Naive thymus-derived CD4-positive, alpha-beta T cell (primary cell): ENCODE measurements at regions of chr14 and their contacts with region 1.

Region 1: DNA sequence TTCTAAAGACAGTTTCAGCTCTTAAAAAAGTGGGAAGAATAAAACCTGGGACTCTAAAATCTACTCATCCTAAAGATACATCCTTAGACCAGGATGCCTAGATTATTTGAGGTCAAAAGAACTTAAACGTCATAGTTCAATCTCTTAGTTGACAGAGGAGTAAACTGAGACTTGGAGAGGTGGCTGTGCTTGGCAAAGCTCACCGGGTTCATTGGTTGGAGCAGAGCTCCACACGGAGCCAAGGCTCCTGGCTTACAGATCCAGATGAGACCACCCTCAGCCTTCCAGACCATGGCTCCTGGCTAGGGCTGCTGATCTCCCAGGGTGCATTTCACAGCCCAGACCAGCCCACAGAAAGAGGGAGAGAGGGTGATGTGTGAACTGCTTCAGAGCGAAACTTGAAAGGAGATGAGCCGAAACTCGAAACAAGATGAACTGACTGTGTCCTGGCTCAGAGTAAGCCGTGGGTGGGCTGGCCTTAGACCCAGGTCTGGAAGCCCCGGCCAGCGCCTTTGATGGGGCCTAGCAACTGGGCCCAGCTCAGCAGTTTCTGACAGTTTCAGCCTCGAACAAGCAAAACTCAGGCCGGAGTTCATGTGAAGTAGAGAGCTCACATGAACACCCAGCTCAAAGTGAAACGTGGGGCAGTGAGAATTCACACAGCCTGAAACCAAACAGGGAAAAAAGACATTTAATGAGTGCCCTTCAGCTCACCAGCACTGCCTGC is 1044.8 kb downstream of the BCL11B start:
- DNase-seq: peak in 4 of 9 donors; percentile 33 to 57 (median 38)
- ATAC-seq: no peak
- H3K4me3 ChIP-seq: peak overlapping the region; percentile 28
- H3K4me3 Mint-ChIP-seq: peak overlapping the region; percentile 51 to 85 (median 68)
- H3K27ac ChIP-seq: peak overlapping the region; percentile 83
- H3K27ac Mint-ChIP-seq: peak overlapping the region; percentile 92 to 100 (median 96)
- H3K4me1 ChIP-seq: peaks cover 35 to 90% of the 10 kb centered on the region in 2 donors
- H3K4me1 Mint-ChIP-seq: peaks cover 48 to 96% (median 91%) of the 10 kb centered on the region in 7 donors
- H3K27me3 ChIP-seq: no peaks in the 10 kb centered on the region
- H3K27me3 Mint-ChIP-seq: no peaks in the 10 kb centered on the region

Region 2: GRCh38 chr14:98099527-98099926 is 127.6 kb before region 1 on chr14:
- CTCF ChIA-PET with region 1: no interaction called
- POLR2A ChIA-PET with region 1: no interaction called
- intact Hi-C with region 1: no loop called
- DNase-seq: no peak
- ATAC-seq: no peak
- H3K4me3 ChIP-seq: no peak overlapping the region
- H3K4me3 Mint-ChIP-seq: peak overlapping the region in 4 of 10 donors; percentile 11 to 51 (median 30)
- H3K27ac ChIP-seq: no peak overlapping the region
- H3K27ac Mint-ChIP-seq: peak overlapping the region in 7 of 9 donors; percentile 6 to 81 (median 26)
- H3K4me1 ChIP-seq: peaks cover 0 to 16% of the 10 kb centered on the region in 2 donors
- H3K4me1 Mint-ChIP-seq: peaks cover 10 to 48% (median 38%) of the 10 kb centered on the region in 7 donors
- H3K27me3 ChIP-seq: no peaks in the 10 kb centered on the region
- H3K27me3 Mint-ChIP-seq: no peaks in the 10 kb centered on the region

Region 3: DNA sequence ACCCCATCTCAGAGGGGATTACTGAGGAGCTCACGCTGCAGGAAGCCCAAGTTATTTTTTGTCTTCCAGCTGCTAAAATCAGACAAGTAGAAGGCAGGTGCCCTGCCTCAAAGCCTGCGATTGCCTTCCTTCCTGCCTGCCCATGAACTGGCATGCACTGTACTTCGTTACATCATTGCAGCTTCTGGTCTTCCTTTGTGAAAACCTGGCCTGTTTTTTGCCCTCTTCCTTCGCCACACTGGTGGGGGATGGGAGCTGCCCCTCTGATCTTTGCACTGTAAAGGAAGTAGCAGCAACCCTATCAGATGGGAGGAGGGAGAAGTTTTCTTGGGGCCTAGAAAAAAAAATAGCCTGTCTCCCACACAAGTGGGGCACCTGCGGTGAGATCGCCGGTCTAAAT is 53.9 kb before region 1 on chr14:
- CTCF ChIA-PET with region 1: no interaction called
- POLR2A ChIA-PET with region 1: interaction called, 8 read pairs
- intact Hi-C with region 1: loop called in 1 of 2 experiments (anchors 2 kb)
- DNase-seq: peak in 7 of 9 donors; percentile 71 to 84 (median 82)
- ATAC-seq: peak; percentile 78
- H3K4me3 ChIP-seq: peak overlapping the region; percentile 33
- H3K4me3 Mint-ChIP-seq: peak overlapping the region; percentile 74 to 90 (median 84)
- H3K27ac ChIP-seq: peak overlapping the region; percentile 81
- H3K27ac Mint-ChIP-seq: peak overlapping the region; percentile 89 to 100 (median 97)
- H3K4me1 ChIP-seq: peaks cover 100% of the 10 kb centered on the region in 2 donors
- H3K4me1 Mint-ChIP-seq: peaks cover 59 to 100% (median 99%) of the 10 kb centered on the region in 7 donors
- H3K27me3 ChIP-seq: no peaks in the 10 kb centered on the region
- H3K27me3 Mint-ChIP-seq: no peaks in the 10 kb centered on the region

Region 4: GRCh38 chr14:98210045-98210672 is 17.0 kb before region 1 on chr14:
- CTCF ChIA-PET with region 1: interaction called, 10 read pairs
- POLR2A ChIA-PET with region 1: interaction called, 35 read pairs
- intact Hi-C with region 1: loop called (anchors 1 to 2 kb)
- DNase-seq: peak in 5 of 9 donors; percentile 36 to 58 (median 50)
- ATAC-seq: peak; percentile 68
- H3K4me3 ChIP-seq: peak overlapping the region; percentile 34
- H3K4me3 Mint-ChIP-seq: peak overlapping the region; percentile 65 to 86 (median 74)
- H3K27ac ChIP-seq: peak overlapping the region; percentile 83
- H3K27ac Mint-ChIP-seq: peak overlapping the region; percentile 91 to 100 (median 97)
- H3K4me1 ChIP-seq: peaks cover 44 to 82% of the 10 kb centered on the region in 2 donors
- H3K4me1 Mint-ChIP-seq: peaks cover 0 to 95% (median 57%) of the 10 kb centered on the region in 7 donors
- H3K27me3 ChIP-seq: no peaks in the 10 kb centered on the region
- H3K27me3 Mint-ChIP-seq: peaks cover 0 to 1% (median 0%) of the 10 kb centered on the region in 5 donors

Region 5: GRCh38 chr14:98259881-98260280 is 32.7 kb after region 1 on chr14:
- CTCF ChIA-PET with region 1: no interaction called
- POLR2A ChIA-PET with region 1: no interaction called
- intact Hi-C with region 1: loop called in 1 of 2 experiments (anchors 1 kb)
- DNase-seq: no peak
- ATAC-seq: no peak
- H3K4me3 ChIP-seq: no peak overlapping the region
- H3K4me3 Mint-ChIP-seq: no peak overlapping the region
- H3K27ac ChIP-seq: no peak overlapping the region
- H3K27ac Mint-ChIP-seq: no peak overlapping the region
- H3K4me1 ChIP-seq: no peaks in the 10 kb centered on the region
- H3K4me1 Mint-ChIP-seq: peaks cover 0 to 36% (median 17%) of the 10 kb centered on the region in 7 donors
- H3K27me3 ChIP-seq: no peaks in the 10 kb centered on the region
- H3K27me3 Mint-ChIP-seq: no peaks in the 10 kb centered on the region

Region 6: DNA sequence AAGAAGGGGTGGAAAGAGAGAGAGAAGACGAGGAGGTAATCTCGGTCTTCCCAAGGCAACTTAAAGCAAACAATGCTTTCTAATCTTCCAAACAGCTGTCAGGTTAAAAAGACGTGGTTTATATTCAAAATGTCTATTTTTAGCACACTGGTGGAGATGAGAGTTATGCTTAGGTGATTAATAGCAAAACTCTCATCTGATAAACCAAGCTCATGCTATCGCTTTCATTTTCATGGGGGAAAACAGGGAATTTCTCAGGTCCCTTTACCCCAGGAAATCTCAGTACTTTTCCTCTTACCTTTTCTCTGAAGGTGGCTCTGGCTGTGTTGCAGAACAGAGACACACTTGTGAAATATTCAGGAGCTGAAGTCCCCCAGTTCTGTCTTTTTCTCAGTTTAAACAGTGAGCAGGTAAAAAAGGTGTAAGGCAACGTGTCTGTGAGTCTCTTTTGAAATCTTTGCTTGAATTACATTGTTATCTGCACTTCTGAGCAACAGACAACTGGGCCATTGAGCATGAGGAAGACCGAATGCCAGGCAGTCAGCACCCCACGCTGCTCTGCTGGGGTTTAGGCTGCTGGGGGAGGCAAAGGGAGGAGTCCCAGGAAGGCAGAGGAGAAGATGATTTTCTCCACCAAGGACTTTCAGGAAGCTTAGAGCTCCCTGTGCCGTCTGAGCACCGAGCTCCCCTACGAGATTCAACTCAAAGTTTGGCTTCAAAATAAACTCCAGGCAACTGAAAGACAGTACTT is 285.5 kb after region 1 on chr14:
- CTCF ChIA-PET with region 1: no interaction called
- POLR2A ChIA-PET with region 1: no interaction called
- intact Hi-C with region 1: no loop called
- DNase-seq: peak in 2 of 9 donors; percentile 15 to 18
- ATAC-seq: no peak
- H3K4me3 ChIP-seq: peak overlapping the region; percentile 24
- H3K4me3 Mint-ChIP-seq: peak overlapping the region; percentile 44 to 73 (median 64)
- H3K27ac ChIP-seq: no peak overlapping the region
- H3K27ac Mint-ChIP-seq: peak overlapping the region in 8 of 9 donors; percentile 48 to 85 (median 72)
- H3K4me1 ChIP-seq: peaks cover 3 to 9% of the 10 kb centered on the region in 2 donors
- H3K4me1 Mint-ChIP-seq: peaks cover 14 to 45% (median 33%) of the 10 kb centered on the region in 7 donors
- H3K27me3 ChIP-seq: no peaks in the 10 kb centered on the region
- H3K27me3 Mint-ChIP-seq: no peaks in the 10 kb centered on the region

Region 7: DNA sequence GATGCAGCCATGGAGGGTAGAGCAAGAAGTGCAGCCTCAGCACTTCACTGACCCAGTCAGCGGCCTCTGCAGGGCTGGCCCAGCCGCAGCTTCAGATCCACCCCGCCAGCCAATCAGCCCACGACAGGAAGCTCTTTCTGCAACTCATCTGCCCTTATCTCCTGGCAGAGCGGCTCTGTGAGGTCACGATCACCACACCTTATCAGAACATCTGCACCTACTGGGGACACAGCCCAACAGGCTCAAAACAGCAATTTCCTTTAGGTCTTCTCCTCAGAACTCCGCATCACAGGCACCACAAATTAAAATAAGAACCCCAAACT is 757.5 kb after region 1 on chr14:
- CTCF ChIA-PET with region 1: no interaction called
- POLR2A ChIA-PET with region 1: no interaction called
- intact Hi-C with region 1: loop called in 1 of 2 experiments (anchors 5 kb)
- DNase-seq: peak; percentile 27 to 76 (median 67)
- ATAC-seq: peak; percentile 96
- H3K4me3 ChIP-seq: peak overlapping the region; percentile 17
- H3K4me3 Mint-ChIP-seq: peak overlapping the region; percentile 51 to 86 (median 78)
- H3K27ac ChIP-seq: peak overlapping the region; percentile 56
- H3K27ac Mint-ChIP-seq: peak overlapping the region; percentile 74 to 97 (median 94)
- H3K4me1 ChIP-seq: peaks cover 29 to 32% of the 10 kb centered on the region in 2 donors
- H3K4me1 Mint-ChIP-seq: peaks cover 27 to 65% (median 48%) of the 10 kb centered on the region in 7 donors
- H3K27me3 ChIP-seq: no peaks in the 10 kb centered on the region
- H3K27me3 Mint-ChIP-seq: no peaks in the 10 kb centered on the region